Esophagus squamous epithelium (tissue), 5 donors: ENCODE measurements at regions of chr15 and their contacts with region 1.

Region 1: GRCh38 chr15:94119923-94120775 is 111.2 kb upstream of the MCTP2 start:
- DNase-seq: no peak
- H3K4me3 ChIP-seq: no peak overlapping the region
- H3K27ac ChIP-seq: peak overlapping the region; percentile 43 to 82 (median 68)
- H3K4me1 ChIP-seq: peaks cover 6 to 31% (median 12%) of the 10 kb centered on the region in 3 donors
- H3K27me3 ChIP-seq: no peaks in the 10 kb centered on the region
- CTCF ChIP-seq: peak; percentile 66 to 99 (median 96)
- POLR2A ChIP-seq: no peak

Region 2: GRCh38 chr15:93087825-93088199 is 1032.3 kb before region 1 on chr15:
- intact Hi-C with region 1: loop called (anchors 5 kb)
- DNase-seq: no peak
- H3K4me3 ChIP-seq: peak overlapping the region; percentile 47 to 90 (median 75)
- H3K27ac ChIP-seq: peak overlapping the region; percentile 81 to 96 (median 88)
- H3K4me1 ChIP-seq: peaks cover 13 to 84% (median 21%) of the 10 kb centered on the region in 3 donors
- H3K27me3 ChIP-seq: peaks cover 0 to 56% (median 0%) of the 10 kb centered on the region in 4 donors
- CTCF ChIP-seq: peak; percentile 84 to 95 (median 90)
- POLR2A ChIP-seq: no peak

Region 3: DNA sequence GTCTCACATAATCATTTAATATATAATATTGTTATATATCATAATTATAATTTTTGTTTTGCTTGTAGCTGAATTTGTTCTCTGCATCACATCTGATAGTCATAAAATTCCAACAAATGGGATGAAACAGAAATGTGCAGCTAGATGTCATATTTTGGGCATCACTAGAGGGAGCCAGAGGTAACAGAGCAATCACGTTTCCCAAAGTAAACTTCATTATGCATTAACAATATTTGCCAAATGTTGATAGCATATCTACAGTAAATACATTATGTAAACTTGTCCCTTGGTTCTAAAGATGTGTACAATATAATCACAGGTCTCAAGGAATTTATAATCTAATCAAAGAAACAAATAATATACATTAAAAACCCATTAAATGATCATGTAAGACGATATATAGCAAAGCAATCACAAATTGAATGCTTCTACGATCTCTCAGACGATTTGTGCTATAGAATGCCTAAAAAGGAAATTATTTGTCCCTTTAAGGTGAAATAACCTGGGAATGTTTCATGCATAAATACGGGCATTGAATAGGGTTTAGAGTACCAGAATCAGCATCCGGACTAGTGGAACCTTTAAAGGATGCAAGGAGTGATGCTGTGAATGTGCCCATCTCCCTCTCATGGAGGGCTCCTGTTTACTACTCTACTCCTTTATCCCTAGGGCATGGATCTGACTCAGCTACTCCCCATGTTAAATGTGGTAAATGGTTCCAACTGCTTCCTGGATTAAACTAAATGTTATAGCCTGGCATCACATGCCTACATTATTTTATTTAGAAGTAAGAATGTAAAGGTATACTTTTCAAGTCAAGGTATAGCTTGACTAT is 122.8 kb before region 1 on chr15:
- intact Hi-C with region 1: loop called (anchors 5 kb)
- DNase-seq: no peak
- H3K4me3 ChIP-seq: no peak overlapping the region
- H3K27ac ChIP-seq: no peak overlapping the region
- H3K4me1 ChIP-seq: peaks cover 0 to 29% (median 0%) of the 10 kb centered on the region in 3 donors
- H3K27me3 ChIP-seq: no peaks in the 10 kb centered on the region
- CTCF ChIP-seq: peak in 5 of 6 experiments; percentile 50 to 76 (median 69)
- POLR2A ChIP-seq: no peak